ENCODE measurements at regions of chr6 and their contacts with region 1.

Region 1: DNA sequence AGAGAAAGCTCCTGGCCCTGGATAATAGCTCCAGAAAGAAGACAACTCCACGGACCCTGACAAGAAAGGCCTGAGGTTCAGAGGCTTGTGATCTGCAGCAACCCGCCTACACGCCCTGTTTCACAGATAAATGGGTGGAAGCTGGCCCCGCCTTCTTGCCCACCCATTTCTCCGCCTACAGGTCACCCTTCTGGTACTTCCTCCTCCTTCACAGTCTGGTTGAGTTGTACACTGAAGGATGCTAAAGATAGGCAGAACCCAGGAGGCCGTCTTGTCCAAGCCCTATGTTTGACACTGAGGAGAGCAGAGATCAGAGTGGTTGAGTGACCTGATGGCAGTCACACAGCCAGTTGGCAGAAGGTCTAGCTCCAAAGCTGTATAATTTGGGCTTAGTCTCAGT is 34.2 kb upstream of the MDGA1 start:
- DNase-seq: no peak
- H3K4me3 ChIP-seq: no peak overlapping the region
- CTCF ChIP-seq: no peak

Region 2: GRCh38 chr6:38477680-38478260 is 745.9 kb after region 1 on chr6:
- in situ Hi-C with region 1: loop called (anchors 10 kb)
- DNase-seq: no peak
- H3K4me3 ChIP-seq: no peak overlapping the region
- CTCF ChIP-seq: no peak